ENCODE measurements at regions of chr10 and their contacts with region 1.

Region 1: DNA sequence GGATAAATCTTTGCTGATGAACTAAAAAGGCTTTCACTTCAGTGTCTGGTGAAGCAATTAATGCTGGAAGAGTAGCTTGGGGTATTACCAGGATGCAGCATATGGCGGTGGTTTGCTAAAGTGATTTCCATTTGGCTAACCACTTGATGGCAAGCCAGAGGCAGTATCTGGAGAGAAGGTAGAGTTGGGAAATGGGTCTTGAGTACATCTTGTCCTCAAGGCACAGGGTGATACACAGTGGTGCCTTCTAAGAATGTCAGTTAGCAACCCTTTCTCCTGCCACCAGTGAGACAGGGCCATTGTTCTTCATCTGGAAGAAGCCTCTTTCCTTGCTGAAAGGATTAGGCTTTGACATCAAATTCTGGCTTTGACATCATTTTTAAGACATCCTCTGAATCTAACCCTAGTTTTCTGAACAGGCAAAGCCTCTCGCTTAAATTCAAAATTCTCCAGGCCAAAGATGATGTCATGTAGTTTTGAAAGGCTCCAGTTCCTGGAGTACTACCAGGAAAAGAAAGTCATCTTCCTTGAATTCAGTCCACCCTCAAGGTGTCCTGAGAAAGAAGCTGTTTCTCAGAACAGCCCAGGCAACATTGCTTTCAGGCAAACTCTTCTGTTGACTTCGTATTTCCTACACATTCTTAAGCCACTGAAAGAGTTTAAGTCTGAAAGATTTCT is 162.4 kb downstream of the ARID5B start:
- DNase-seq: no peak
- ATAC-seq: no peak
- H3K4me3 ChIP-seq: no peak overlapping the region
- H3K27ac ChIP-seq: no peak overlapping the region; the same call in 1 of the 2 replicates
- H3K4me1 ChIP-seq: no peaks in the 10 kb centered on the region
- H3K27me3 ChIP-seq: no peaks in the 10 kb centered on the region
- CTCF ChIP-seq: no peak

Region 2: DNA sequence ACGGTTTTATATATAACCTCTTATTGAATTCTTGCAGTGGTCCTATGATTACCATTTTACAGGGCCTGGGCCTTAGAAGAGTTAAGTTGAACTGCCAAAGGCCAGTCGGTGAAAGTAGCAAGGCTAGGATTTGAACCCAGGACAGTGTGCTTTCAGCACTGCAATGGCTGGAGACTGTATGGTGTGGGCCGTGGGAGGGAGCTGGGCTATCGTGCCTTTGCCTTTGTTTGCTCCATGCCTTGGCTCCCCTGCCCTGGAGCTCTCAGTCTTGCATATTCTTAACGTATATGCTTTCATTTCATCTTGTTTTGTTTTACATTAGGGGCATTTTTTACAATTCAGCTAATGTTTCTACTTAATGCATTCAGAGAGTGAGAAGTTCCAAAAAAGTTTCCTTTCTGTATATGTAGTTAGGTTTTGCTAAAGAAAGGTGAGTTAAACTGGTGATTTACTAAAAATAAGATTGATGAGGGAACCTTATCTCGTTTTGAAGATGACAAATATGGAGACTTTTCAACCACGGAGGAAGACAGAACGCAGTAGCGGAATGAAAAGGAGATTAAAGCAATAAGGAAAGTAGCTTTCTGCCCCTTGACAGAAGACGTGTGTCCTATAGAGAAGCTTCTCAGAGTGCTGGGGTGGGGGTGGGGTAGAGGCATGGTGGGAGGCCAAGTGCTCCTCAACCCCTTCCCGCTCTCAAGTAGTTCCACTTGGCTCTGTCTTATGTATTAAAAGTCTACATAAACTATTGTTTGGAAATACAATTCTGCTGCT is 122.2 kb after region 1 on chr10:
- CTCF ChIA-PET with region 1: no interaction called
- POLR2A ChIA-PET with region 1: interaction called, 11 read pairs
- in situ Hi-C with region 1: no loop called
- intact Hi-C with region 1: no loop called
- DNase-seq: no peak
- ATAC-seq: no peak
- H3K4me3 ChIP-seq: no peak overlapping the region
- H3K27ac ChIP-seq: peak overlapping the region; percentile 27; the same call in 1 of the 2 replicates
- H3K4me1 ChIP-seq: peaks cover 5% of the 10 kb centered on the region
- H3K27me3 ChIP-seq: no peaks in the 10 kb centered on the region
- CTCF ChIP-seq: no peak

Region 3: DNA sequence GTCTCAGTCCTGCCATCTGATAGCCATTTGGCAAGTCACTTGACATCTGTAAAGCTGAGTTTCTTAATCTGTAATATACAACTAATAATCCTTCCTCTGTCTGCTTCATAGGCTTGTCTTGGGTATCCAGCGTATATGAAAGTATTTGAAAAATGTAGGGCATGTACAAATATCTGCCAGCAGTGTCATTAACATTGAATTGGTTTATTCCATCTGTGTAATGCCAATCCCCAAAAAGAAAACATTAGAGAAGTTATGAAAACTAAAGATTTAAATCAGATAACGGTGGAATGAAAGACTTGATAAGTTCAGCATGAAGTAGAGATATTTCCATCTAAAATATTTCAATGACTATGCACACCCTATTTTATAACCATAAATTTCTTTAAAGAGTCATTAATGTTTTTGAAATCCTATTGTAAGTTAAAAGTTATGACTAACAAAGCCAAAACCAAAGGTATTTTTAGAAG is 214.5 kb after region 1 on chr10:
- CTCF ChIA-PET with region 1: no interaction called
- POLR2A ChIA-PET with region 1: interaction called, 12 read pairs
- in situ Hi-C with region 1: no loop called
- intact Hi-C with region 1: no loop called
- DNase-seq: no peak
- ATAC-seq: peak; percentile 60; the same call in 1 of the 2 replicates
- H3K4me3 ChIP-seq: no peak overlapping the region
- H3K27ac ChIP-seq: no peak overlapping the region; the same call in 1 of the 2 replicates
- H3K4me1 ChIP-seq: no peaks in the 10 kb centered on the region
- H3K27me3 ChIP-seq: no peaks in the 10 kb centered on the region
- CTCF ChIP-seq: no peak

Measured in Panc1 (cell line).